Activated CD8-positive, alpha-beta memory T cell treated with anti-CD3 and anti-CD28 coated beads, Interleukin-2, amount 10 ng/mL, durations not matched to agents 7 days and 5 days (primary cell): ENCODE measurements at regions of chr6 and their contacts with region 1.

Region 1: GRCh38 chr6:227074-227782 is 65.1 kb upstream of the DUSP22 start:
- DNase-seq: no peak
- ATAC-seq: no peak
- H3K4me3 Mint-ChIP-seq: no peak overlapping the region
- H3K27ac Mint-ChIP-seq: peak overlapping the region; percentile 61
- H3K4me1 Mint-ChIP-seq: peaks cover 80% of the 10 kb centered on the region
- H3K27me3 Mint-ChIP-seq: no peaks in the 10 kb centered on the region

Region 2: DNA sequence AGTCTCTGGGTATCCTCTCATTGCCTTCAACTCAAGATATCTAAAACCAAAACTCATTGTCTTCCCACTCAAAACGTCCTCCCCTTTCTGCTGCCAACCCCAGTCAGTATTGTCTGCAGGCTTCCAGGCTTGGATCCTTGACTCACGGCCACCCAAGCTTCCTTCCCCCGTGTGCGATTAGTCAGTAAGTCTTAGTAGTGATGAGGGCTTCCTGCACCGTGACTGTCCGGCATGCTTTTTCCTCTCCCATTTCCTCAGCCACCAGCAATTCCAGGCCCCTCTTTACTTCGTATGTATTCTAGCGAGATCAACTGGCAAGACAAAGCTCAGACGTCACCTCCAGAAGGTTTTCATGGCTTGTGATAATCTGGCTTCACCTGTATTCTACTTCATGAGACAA is 23.6 kb before region 1 on chr6:
- CTCF ChIA-PET with region 1: no interaction called
- DNase-seq: no peak
- ATAC-seq: no peak
- H3K4me3 Mint-ChIP-seq: no peak overlapping the region
- H3K27ac Mint-ChIP-seq: no peak overlapping the region
- H3K4me1 Mint-ChIP-seq: peaks cover 10% of the 10 kb centered on the region
- H3K27me3 Mint-ChIP-seq: peaks cover 15% of the 10 kb centered on the region

Region 3: DNA sequence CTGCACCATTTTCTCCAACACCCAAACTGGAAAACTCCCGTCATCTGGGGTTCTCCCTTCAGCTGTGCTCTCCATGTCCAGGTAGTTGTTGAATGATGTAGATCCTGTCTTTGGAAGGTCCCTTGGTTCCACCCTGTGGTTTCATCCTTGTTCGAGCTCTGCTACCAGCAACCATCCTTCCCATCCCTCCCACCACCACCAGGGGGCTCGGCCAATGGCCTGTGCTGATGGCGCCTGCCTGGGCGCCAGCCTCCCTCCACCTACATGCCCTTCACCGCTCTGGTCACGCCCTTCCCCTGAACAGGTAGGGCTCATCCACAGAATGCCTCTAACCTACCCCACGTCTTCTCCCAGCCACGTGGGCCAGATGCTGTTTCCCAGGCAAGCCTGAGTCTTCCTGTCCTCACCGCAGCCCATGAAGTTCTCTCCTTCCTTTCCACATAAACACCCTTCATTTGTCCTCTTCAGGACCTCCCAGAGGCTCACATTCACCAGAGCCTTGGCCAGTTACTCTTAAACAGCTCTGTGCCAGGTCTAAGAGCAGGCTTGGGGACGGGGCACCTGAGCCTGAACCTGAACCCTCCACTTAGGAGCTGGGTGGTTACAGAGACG is 10.1 kb before region 1 on chr6:
- CTCF ChIA-PET with region 1: interaction called, 12 read pairs
- DNase-seq: no peak
- ATAC-seq: no peak
- H3K4me3 Mint-ChIP-seq: no peak overlapping the region
- H3K27ac Mint-ChIP-seq: peak overlapping the region; percentile 37
- H3K4me1 Mint-ChIP-seq: peaks cover 60% of the 10 kb centered on the region
- H3K27me3 Mint-ChIP-seq: peaks cover 4% of the 10 kb centered on the region

Region 4: GRCh38 chr6:246352-246751 is 19.1 kb after region 1 on chr6:
- CTCF ChIA-PET with region 1: no interaction called
- DNase-seq: no peak
- ATAC-seq: no peak
- H3K4me3 Mint-ChIP-seq: no peak overlapping the region
- H3K27ac Mint-ChIP-seq: no peak overlapping the region
- H3K4me1 Mint-ChIP-seq: peaks cover 10% of the 10 kb centered on the region
- H3K27me3 Mint-ChIP-seq: peaks cover 8% of the 10 kb centered on the region